IMR-90 (cell line): ENCODE measurements at regions of chr7 and their contacts with region 1.

Region 1: GRCh38 chr7:119270045-119270464 is 1002.9 kb upstream of the KCND2 start:
- DNase-seq: peak; percentile 55
- ATAC-seq: peak; percentile 95
- H3K4me3 ChIP-seq: no peak overlapping the region
- H3K27ac ChIP-seq: no peak overlapping the region
- H3K4me1 ChIP-seq: no peaks in the 10 kb centered on the region
- H3K27me3 ChIP-seq: no peaks in the 10 kb centered on the region
- CTCF ChIP-seq: peak; percentile 78
- POLR2A ChIP-seq: no peak
- RAD21 ChIP-seq: peak; percentile 66

Region 2: GRCh38 chr7:118872568-118872967 is 397.5 kb before region 1 on chr7:
- CTCF ChIA-PET with region 1: no interaction called
- POLR2A ChIA-PET with region 1: no interaction called
- dilution Hi-C with region 1: no loop called
- in situ Hi-C with region 1: no loop called
- intact Hi-C with region 1: no loop called
- DNase-seq: no peak
- ATAC-seq: no peak
- H3K4me3 ChIP-seq: no peak overlapping the region
- H3K27ac ChIP-seq: no peak overlapping the region
- H3K4me1 ChIP-seq: no peaks in the 10 kb centered on the region
- H3K27me3 ChIP-seq: no peaks in the 10 kb centered on the region
- CTCF ChIP-seq: no peak
- POLR2A ChIP-seq: no peak
- RAD21 ChIP-seq: no peak

Region 3: GRCh38 chr7:120337308-120337907 is 1067.4 kb after region 1 on chr7:
- CTCF ChIA-PET with region 1: no interaction called
- POLR2A ChIA-PET with region 1: no interaction called
- dilution Hi-C with region 1: no loop called
- in situ Hi-C with region 1: no loop called
- intact Hi-C with region 1: loop called (anchors 10 kb)
- DNase-seq: peak; percentile 0
- ATAC-seq: peak; percentile 65
- H3K4me3 ChIP-seq: no peak overlapping the region
- H3K27ac ChIP-seq: no peak overlapping the region
- H3K4me1 ChIP-seq: no peaks in the 10 kb centered on the region
- H3K27me3 ChIP-seq: no peaks in the 10 kb centered on the region
- CTCF ChIP-seq: peak; percentile 27; the same call in 1 of the 2 replicates
- POLR2A ChIP-seq: no peak
- RAD21 ChIP-seq: no peak

Region 4: GRCh38 chr7:120554960-120555571 is 1285.0 kb after region 1 on chr7:
- CTCF ChIA-PET with region 1: no interaction called
- POLR2A ChIA-PET with region 1: no interaction called
- dilution Hi-C with region 1: no loop called
- in situ Hi-C with region 1: loop called (anchors 10 kb)
- intact Hi-C with region 1: loop called (anchors 1 kb)
- DNase-seq: peak; percentile 47
- ATAC-seq: peak; percentile 86
- H3K4me3 ChIP-seq: no peak overlapping the region
- H3K27ac ChIP-seq: no peak overlapping the region
- H3K4me1 ChIP-seq: no peaks in the 10 kb centered on the region
- H3K27me3 ChIP-seq: no peaks in the 10 kb centered on the region; the same call in 1 of the 2 replicates
- CTCF ChIP-seq: peak; percentile 71
- POLR2A ChIP-seq: no peak
- RAD21 ChIP-seq: peak; percentile 75